ENCODE measurements at regions of chr19 and their contacts with region 1.

Region 1: GRCh38 chr19:47231215-47231984 is 401 bp upstream of the BBC3 start:
- DNase-seq: peak; percentile 90 to 92
- ATAC-seq: peak; percentile 27 to 58 (median 46)
- H3K4me3 ChIP-seq: peak overlapping the region; percentile 89 to 100 (median 98)
- H3K27ac ChIP-seq: peak overlapping the region; percentile 68 to 100 (median 84)
- H3K4me1 ChIP-seq: peaks cover 11 to 57% (median 37%) of the 10 kb centered on the region in 9 donors
- H3K27me3 ChIP-seq: no peaks in the 10 kb centered on the region
- CTCF ChIP-seq: no peak

Region 2: DNA sequence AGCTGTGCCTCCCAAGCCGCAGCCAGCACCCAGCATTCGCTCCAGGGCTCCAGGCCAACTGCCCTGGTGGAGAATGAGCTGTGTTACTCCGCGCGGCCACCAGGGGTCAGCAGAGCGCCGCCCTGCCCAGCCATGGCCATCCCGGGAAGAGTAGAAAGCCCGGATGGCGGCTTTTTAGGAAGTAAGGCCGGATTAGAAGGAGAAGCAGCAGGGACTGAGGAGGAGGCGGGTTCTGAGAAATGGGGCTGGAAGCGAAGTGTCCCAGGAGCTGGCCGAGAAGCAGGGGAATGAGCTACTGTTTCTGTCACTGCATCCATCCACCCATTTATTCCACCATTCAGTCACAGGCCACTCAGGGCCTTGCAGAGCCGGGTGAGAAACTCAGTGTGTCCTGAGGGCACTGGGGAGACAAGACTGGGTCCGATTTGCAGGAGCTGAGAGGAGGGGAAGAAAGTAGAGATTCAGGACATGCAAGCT is 218.3 kb before region 1 on chr19:
- intact Hi-C with region 1: loop called in 1 of 10 experiments (anchors 10 kb)
- DNase-seq: peak; percentile 81 to 87
- ATAC-seq: peak; percentile 89 to 97 (median 96)
- H3K4me3 ChIP-seq: no peak overlapping the region
- H3K27ac ChIP-seq: no peak overlapping the region
- H3K4me1 ChIP-seq: peaks cover 0 to 9% (median 4%) of the 10 kb centered on the region in 9 donors
- H3K27me3 ChIP-seq: peaks cover 0 to 11% (median 0%) of the 10 kb centered on the region in 7 donors
- CTCF ChIP-seq: peak; percentile 98 to 100 (median 99)

Region 3: GRCh38 chr19:47381653-47382279 is 150.4 kb after region 1 on chr19:
- intact Hi-C with region 1: no loop called
- DNase-seq: no peak
- ATAC-seq: no peak
- H3K4me3 ChIP-seq: no peak overlapping the region
- H3K27ac ChIP-seq: peak overlapping the region in 1 of 10 donors; percentile 67
- H3K4me1 ChIP-seq: peaks cover 0 to 25% (median 4%) of the 10 kb centered on the region in 9 donors
- H3K27me3 ChIP-seq: peaks cover 0 to 3% (median 0%) of the 10 kb centered on the region in 7 donors
- CTCF ChIP-seq: no peak

Region 4: GRCh38 chr19:47414469-47414868 is 183.1 kb after region 1 on chr19:
- intact Hi-C with region 1: no loop called
- DNase-seq: no peak
- ATAC-seq: peak in 2 of 8 donors; percentile 20 to 52
- H3K4me3 ChIP-seq: no peak overlapping the region
- H3K27ac ChIP-seq: no peak overlapping the region
- H3K4me1 ChIP-seq: peaks cover 0 to 9% (median 4%) of the 10 kb centered on the region in 9 donors
- H3K27me3 ChIP-seq: peaks cover 0 to 72% (median 57%) of the 10 kb centered on the region in 7 donors
- CTCF ChIP-seq: peak in 2 of 9 donors; percentile 14 to 17